Activated T-helper 2 cell treated with anti-CD3 and anti-CD28 coated beads, Interferon-gamma antibody, Interleukin-2, Interleukin-4, amounts not matched to agents 10 μg/mL and 5 μg/mL and 100 μg/mL, durations not matched to agents 14 hours and 24 hours and 36 hours (primary cell): ENCODE measurements at regions of chr1 and their contacts with region 1.

Region 1: DNA sequence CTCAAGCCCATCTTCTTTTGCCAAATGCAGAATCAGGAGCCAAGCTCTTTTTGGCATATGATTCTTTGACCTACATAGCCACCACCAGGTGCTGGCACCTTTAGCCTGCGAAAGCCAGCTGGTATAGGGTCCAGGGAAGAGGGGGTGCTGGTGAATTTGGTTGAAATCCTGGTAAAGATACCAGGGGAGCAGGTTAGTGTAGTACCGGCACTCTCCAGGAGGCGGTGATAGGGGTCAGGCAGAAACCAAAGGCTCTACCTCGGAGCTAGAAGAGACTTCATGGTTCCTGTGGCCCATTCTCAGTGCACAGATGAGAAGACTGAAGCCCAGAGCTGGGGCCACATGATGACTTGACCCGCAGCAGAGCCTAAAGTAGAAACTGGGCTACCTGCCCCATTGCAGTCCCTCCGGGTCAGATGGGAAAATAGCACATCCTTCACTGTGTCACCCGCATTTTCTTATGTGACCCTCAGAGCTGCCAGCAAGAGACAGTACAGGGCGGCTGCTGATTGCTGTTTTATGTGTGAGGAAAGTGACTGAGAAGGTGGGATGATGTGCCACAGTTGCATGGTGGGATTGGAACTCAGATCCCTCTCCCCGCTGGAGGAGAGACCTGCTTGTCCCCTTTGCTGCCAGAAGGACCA is 36.0 kb upstream of the IL19 start:
- DNase-seq: peak; percentile 63
- H3K4me3 Mint-ChIP-seq: no peak overlapping the region
- H3K27ac Mint-ChIP-seq: peak overlapping the region; percentile 40
- H3K4me1 Mint-ChIP-seq: peaks cover 47% of the 10 kb centered on the region
- H3K27me3 Mint-ChIP-seq: no peaks in the 10 kb centered on the region

Region 2: DNA sequence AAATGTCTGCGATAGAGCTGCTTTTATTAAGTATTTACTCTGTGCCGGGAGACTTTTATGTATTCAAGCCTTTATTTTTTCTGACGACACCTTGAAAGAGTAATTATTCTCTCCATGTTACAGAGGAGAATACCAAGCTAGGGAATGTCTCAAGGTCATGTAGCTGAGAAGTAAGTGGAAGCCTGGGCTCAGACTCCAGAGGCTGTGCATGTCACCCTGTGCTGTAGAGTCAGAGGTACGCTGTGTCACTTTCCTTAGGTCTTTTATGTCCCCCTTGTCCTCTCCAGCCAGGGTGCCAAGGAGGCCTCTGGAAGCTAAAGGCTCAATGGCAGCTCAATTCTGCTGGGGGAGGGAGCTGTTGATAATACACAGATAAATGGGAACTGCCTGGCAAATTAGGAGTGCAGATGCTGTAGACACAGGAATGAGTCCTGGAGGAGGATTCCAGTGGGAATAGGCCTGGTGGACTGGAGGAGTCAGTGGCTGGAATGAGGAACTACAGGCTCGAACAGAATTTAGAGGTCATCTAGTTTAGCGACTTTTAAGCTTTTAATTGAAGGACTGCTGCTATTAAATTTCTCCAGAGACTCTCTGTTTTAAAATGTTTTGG is 26.6 kb after region 1 on chr1:
- intact Hi-C with region 1: loop called (anchors 1 kb)
- DNase-seq: no peak
- H3K4me3 Mint-ChIP-seq: no peak overlapping the region
- H3K27ac Mint-ChIP-seq: no peak overlapping the region
- H3K4me1 Mint-ChIP-seq: peaks cover 30% of the 10 kb centered on the region
- H3K27me3 Mint-ChIP-seq: peaks cover 4% of the 10 kb centered on the region

Region 3: GRCh38 chr1:206766251-206766856 is 31.7 kb after region 1 on chr1:
- intact Hi-C with region 1: loop called (anchors 1 kb)
- DNase-seq: peak; percentile 69
- H3K4me3 Mint-ChIP-seq: no peak overlapping the region
- H3K27ac Mint-ChIP-seq: peak overlapping the region; percentile 69
- H3K4me1 Mint-ChIP-seq: peaks cover 65% of the 10 kb centered on the region
- H3K27me3 Mint-ChIP-seq: peaks cover 6% of the 10 kb centered on the region

Region 4: GRCh38 chr1:206784471-206784903 is 49.9 kb after region 1 on chr1:
- intact Hi-C with region 1: loop called (anchors 1 kb)
- DNase-seq: peak; percentile 88
- H3K4me3 Mint-ChIP-seq: peak overlapping the region; percentile 61
- H3K27ac Mint-ChIP-seq: peak overlapping the region; percentile 83
- H3K4me1 Mint-ChIP-seq: peaks cover 67% of the 10 kb centered on the region
- H3K27me3 Mint-ChIP-seq: peaks cover 5% of the 10 kb centered on the region

Region 5: DNA sequence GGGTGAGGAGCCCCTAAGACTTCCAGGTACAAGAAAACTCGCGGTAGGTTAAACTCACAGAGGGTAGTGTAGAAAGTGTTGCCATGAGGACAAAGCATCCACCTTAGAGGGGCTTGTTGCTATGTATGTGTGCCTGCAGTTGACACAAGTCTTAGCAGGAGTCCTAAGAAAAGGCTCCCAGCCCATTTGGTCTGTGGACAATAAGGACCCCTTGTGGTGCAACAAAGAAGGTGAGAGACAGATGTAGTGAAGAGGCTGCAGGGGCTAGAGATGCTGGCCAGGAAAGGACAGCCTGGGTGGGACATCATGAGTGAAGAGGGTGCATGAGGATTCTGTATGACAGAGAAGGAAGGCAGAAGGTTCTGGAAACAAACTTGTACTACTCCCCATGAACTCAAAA is 74.0 kb after region 1 on chr1:
- intact Hi-C with region 1: loop called (anchors 1 kb)
- DNase-seq: peak; percentile 47
- H3K4me3 Mint-ChIP-seq: no peak overlapping the region
- H3K27ac Mint-ChIP-seq: no peak overlapping the region
- H3K4me1 Mint-ChIP-seq: peaks cover 48% of the 10 kb centered on the region
- H3K27me3 Mint-ChIP-seq: peaks cover 3% of the 10 kb centered on the region